Naive thymus-derived CD4-positive, alpha-beta T cell (primary cell): ENCODE measurements at regions of chr1 and their contacts with region 1.

Region 1: DNA sequence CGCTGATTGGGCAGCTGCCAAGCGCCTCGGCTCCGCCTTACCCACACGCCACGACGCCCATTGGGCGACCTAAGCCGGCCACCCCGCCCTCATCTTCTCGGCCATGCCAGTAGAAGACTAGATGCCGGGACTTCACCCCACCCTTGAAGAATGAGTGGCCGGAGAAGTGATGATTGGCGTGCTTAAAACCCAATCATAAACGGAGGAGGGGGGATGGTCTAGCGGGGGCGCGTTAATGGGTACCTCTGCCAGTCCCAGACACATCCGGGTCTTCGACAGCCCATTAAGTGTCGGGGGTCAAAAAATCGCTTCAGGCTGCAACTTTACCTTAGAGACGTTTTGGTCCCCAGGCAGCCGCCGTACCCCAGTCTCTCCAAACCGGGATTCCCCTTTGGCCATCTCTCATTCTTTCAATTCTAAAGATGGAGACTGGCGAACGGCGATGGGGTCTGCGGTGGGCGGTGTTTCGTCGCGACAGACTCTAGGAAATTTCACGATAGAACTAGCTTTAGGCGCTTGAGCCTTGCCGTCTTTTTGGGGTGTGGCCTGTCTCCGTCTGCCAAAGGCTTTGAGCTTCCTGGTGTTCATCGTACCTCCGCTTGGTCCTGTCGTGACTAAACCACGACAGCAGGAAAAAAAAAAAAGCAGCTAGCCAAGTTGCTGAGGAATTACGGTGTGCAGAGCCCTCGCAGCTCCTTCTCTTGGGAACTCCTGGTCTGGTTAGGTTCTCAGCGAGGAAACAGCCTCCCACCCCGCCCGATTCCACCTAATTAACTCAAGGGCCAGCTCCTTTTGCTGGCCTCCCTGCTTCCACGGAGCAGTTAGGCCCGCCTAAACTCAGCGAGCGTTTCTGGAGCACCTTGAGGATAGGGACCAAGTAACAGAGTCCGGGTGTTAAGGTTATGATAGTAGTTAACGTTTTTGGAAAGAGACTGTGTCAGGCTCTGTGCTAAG is at the start of gene GATAD2B:
- DNase-seq: peak; percentile 86 to 100 (median 99)
- ATAC-seq: peak; percentile 94
- H3K4me3 ChIP-seq: peak within 1 kb of the TSS; percentile 87
- H3K4me3 Mint-ChIP-seq: peak within 1 kb of the TSS; percentile 83 to 96 (median 94)
- H3K27ac ChIP-seq: peak within 1 kb of the TSS; percentile 97
- H3K27ac Mint-ChIP-seq: peak within 1 kb of the TSS; percentile 90 to 99 (median 97)
- H3K4me1 ChIP-seq: peaks cover 35% of the 10 kb centered on the region in 2 donors
- H3K4me1 Mint-ChIP-seq: peaks cover 31 to 53% (median 44%) of the 10 kb centered on the region in 7 donors
- H3K27me3 ChIP-seq: no peaks in the 10 kb centered on the region
- H3K27me3 Mint-ChIP-seq: peaks cover 0 to 3% (median 0%) of the 10 kb centered on the region in 5 donors
- total RNA-seq, gene GATAD2B: 67.3 to 102 (median 75.5) TPM

Region 2: GRCh38 chr1:153658400-153659174 is 264.7 kb before region 1 on chr1 and contains the start of gene SNAPIN:
- CTCF ChIA-PET with region 1: no interaction called
- POLR2A ChIA-PET with region 1: no interaction called
- intact Hi-C with region 1: loop called in 1 of 2 experiments (anchors 1 kb)
- DNase-seq: peak; percentile 81 to 94 (median 88)
- ATAC-seq: peak; percentile 98
- H3K4me3 ChIP-seq: peak within 1 kb of the TSS; percentile 93
- H3K4me3 Mint-ChIP-seq: peak within 1 kb of the TSS; percentile 91 to 97 (median 94)
- H3K27ac ChIP-seq: peak within 1 kb of the TSS; percentile 90
- H3K27ac Mint-ChIP-seq: peak within 1 kb of the TSS; percentile 90 to 98 (median 91)
- H3K4me1 ChIP-seq: peaks cover 9 to 13% of the 10 kb centered on the region in 2 donors
- H3K4me1 Mint-ChIP-seq: peaks cover 8 to 26% (median 14%) of the 10 kb centered on the region in 7 donors
- H3K27me3 ChIP-seq: no peaks in the 10 kb centered on the region
- H3K27me3 Mint-ChIP-seq: no peaks in the 10 kb centered on the region
- total RNA-seq, gene SNAPIN: 10.2 to 43.5 (median 29.8) TPM

Region 3: DNA sequence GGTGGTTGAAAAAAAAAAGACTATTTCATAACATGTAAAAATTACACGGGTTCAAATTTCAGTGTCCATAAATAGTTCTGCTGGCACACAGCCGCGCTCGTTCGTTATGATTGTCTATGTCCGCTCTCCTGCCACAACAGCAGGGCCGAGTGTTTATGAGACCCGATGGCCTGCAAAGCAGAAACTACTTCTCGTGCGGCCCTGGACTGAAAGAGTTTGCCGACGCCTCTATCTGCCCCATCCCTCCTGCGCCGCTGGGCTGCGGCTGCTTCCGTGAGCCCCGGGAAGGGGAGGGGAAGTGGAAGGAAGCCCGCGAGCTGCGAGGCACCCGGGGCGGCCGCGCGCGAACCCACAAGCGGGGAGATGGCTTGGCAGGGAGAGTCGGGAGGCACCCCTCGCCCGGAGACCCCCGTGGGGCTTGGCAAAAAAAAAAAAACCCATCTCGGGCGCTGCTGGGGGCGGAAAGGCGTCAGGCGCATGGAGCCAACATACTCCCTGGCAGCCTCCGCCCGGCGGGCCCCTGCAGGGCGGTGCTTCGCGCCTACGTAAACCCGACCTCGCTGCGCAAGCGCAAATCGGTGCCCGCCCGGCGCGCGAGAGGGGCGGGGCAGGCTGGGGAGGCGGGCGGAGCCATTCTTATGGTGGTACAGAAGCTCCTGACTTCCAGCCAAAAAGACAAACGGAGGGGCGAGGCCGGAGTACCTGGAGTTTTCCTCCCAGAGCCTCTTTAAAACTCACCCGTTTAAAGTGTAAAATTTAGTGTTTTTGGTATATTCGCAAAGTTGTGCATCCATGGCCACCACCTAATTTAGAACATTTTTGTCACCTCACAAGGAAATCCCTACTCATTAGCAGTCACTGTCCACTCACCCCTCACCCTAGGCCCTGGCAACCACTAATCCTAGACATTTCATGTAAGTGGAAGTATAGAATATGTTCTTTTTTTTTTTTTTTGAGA is 139.7 kb before region 1 on chr1:
- CTCF ChIA-PET with region 1: no interaction called
- POLR2A ChIA-PET with region 1: no interaction called
- intact Hi-C with region 1: loop called (anchors 1 to 2 kb)
- DNase-seq: peak; percentile 86 to 95 (median 92)
- ATAC-seq: peak; percentile 99
- H3K4me3 ChIP-seq: peak overlapping the region; percentile 78
- H3K4me3 Mint-ChIP-seq: peak overlapping the region; percentile 80 to 97 (median 90)
- H3K27ac ChIP-seq: peak overlapping the region; percentile 96
- H3K27ac Mint-ChIP-seq: peak overlapping the region; percentile 92 to 99 (median 95)
- H3K4me1 ChIP-seq: peaks cover 0 to 10% of the 10 kb centered on the region in 2 donors
- H3K4me1 Mint-ChIP-seq: peaks cover 0 to 17% (median 9%) of the 10 kb centered on the region in 7 donors
- H3K27me3 ChIP-seq: no peaks in the 10 kb centered on the region
- H3K27me3 Mint-ChIP-seq: peaks cover 0 to 6% (median 4%) of the 10 kb centered on the region in 5 donors

Region 4: DNA sequence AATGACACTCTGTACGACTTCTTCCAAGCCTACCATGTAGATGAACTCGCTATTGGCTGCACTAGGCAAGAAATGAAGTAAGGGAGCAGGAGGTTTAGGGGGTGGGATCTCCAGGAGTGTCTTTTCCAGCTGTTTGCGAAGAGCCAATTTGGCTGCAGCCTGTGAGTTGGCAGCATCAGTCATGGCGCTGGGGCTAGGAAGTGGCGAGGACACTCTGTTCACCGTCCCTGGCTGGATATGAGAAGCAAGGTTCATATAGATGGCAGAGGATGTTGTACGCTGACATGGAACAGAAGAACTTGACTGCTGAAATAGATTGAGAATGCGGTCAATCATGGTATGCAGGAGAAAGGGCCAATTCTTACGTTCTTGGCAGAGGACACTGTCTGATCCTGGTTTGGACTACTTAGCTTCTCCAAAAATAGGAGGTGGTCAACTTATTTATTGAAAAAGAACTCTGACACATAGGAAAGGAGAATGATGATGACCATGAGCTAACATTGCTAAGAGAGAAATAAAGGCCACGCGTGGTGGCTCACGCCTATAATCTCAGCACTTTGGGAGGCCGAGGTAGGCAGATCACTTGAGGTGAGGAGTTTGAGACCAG is 106.9 kb before region 1 on chr1:
- CTCF ChIA-PET with region 1: no interaction called
- POLR2A ChIA-PET with region 1: interaction called, 5 read pairs
- intact Hi-C with region 1: loop called in 1 of 2 experiments (anchors 1 kb)
- DNase-seq: no peak
- ATAC-seq: no peak
- H3K4me3 ChIP-seq: no peak overlapping the region
- H3K4me3 Mint-ChIP-seq: no peak overlapping the region
- H3K27ac ChIP-seq: no peak overlapping the region
- H3K27ac Mint-ChIP-seq: peak overlapping the region in 2 of 9 donors; percentile 19 to 26
- H3K4me1 ChIP-seq: no peaks in the 10 kb centered on the region
- H3K4me1 Mint-ChIP-seq: peaks cover 0 to 5% (median 2%) of the 10 kb centered on the region in 7 donors
- H3K27me3 ChIP-seq: no peaks in the 10 kb centered on the region
- H3K27me3 Mint-ChIP-seq: no peaks in the 10 kb centered on the region

Region 5: GRCh38 chr1:153936011-153936802 is 13.0 kb after region 1 on chr1:
- CTCF ChIA-PET with region 1: no interaction called
- POLR2A ChIA-PET with region 1: interaction called, 16 read pairs
- intact Hi-C with region 1: no loop called
- DNase-seq: no peak
- ATAC-seq: no peak
- H3K4me3 ChIP-seq: no peak overlapping the region
- H3K4me3 Mint-ChIP-seq: no peak overlapping the region
- H3K27ac ChIP-seq: no peak overlapping the region
- H3K27ac Mint-ChIP-seq: peak overlapping the region in 3 of 9 donors; percentile 12 to 75 (median 65)
- H3K4me1 ChIP-seq: no peaks in the 10 kb centered on the region
- H3K4me1 Mint-ChIP-seq: peaks cover 5 to 21% (median 10%) of the 10 kb centered on the region in 7 donors
- H3K27me3 ChIP-seq: no peaks in the 10 kb centered on the region
- H3K27me3 Mint-ChIP-seq: no peaks in the 10 kb centered on the region

Region 6: DNA sequence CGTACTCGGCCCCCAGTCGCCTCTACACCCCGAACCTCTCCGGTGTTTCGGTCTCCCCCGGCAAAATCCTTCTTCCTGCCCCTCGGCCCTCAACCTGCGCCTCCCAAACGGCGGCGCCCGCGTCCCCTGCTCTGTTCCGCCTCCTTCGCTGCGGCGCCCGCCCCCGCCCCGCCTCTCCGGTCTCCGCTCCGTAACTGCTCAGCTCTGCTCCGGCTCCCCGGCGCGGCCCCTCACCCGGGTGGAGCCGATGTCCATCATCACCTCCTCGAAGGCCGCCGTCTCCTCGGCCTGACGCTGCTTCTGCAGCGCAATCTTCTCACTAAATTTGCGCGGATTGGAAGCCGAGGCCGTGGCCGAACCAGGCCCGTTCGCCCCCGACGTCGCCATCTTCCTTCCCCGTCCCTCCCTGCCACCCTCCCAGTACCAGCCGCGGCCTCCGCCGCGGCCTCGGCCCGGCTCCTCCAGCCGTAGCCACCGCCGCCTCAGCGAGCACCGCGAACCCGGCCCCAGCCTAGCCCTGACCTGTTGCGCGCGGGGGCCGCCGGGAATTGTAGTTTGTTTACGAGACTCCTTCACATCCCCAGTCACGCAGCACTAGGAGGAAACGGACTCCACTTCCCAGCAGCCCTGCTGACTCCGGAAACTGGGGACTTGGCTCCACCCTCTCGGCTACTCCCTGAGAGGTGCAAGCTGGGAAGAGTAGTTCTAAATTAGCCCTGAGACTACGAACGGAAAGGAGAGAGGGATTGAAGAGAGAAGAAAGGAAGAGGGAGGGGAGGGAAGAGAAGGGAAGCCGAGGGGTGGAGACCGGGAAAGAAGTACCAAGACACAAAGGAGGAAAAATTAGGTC is 35.1 kb after region 1 on chr1 and contains the start of gene CRTC2:
- CTCF ChIA-PET with region 1: interaction called, 3 read pairs
- POLR2A ChIA-PET with region 1: interaction called, 16 read pairs
- intact Hi-C with region 1: loop called (anchors 1 kb)
- DNase-seq: peak; percentile 86 to 99 (median 96)
- ATAC-seq: peak; percentile 94
- H3K4me3 ChIP-seq: peak within 1 kb of the TSS; percentile 74
- H3K4me3 Mint-ChIP-seq: peak within 1 kb of the TSS; percentile 91 to 100 (median 97)
- H3K27ac ChIP-seq: peak within 1 kb of the TSS; percentile 92
- H3K27ac Mint-ChIP-seq: peak within 1 kb of the TSS; percentile 89 to 98 (median 94)
- H3K4me1 ChIP-seq: peaks cover 36% of the 10 kb centered on the region in 2 donors
- H3K4me1 Mint-ChIP-seq: peaks cover 34 to 71% (median 67%) of the 10 kb centered on the region in 7 donors
- H3K27me3 ChIP-seq: no peaks in the 10 kb centered on the region
- H3K27me3 Mint-ChIP-seq: no peaks in the 10 kb centered on the region
- total RNA-seq, gene CRTC2: 86.1 to 157 (median 119) TPM

Region 7: GRCh38 chr1:153977250-153978240 is 54.3 kb after region 1 on chr1 and contains the start of gene JTB:
- CTCF ChIA-PET with region 1: interaction called, 6 read pairs
- POLR2A ChIA-PET with region 1: interaction called, 27 read pairs
- intact Hi-C with region 1: loop called (anchors 1 to 2 kb)
- DNase-seq: peak; percentile 65 to 89 (median 78)
- ATAC-seq: peak; percentile 98
- H3K4me3 ChIP-seq: peak within 1 kb of the TSS; percentile 94
- H3K4me3 Mint-ChIP-seq: peak within 1 kb of the TSS; percentile 92 to 99 (median 97)
- H3K27ac ChIP-seq: peak within 1 kb of the TSS; percentile 96
- H3K27ac Mint-ChIP-seq: peak within 1 kb of the TSS; percentile 84 to 98 (median 94)
- H3K4me1 ChIP-seq: peaks cover 9 to 15% of the 10 kb centered on the region in 2 donors
- H3K4me1 Mint-ChIP-seq: peaks cover 23 to 51% (median 40%) of the 10 kb centered on the region in 7 donors
- H3K27me3 ChIP-seq: no peaks in the 10 kb centered on the region
- H3K27me3 Mint-ChIP-seq: no peaks in the 10 kb centered on the region
- total RNA-seq, gene JTB: 78.4 to 134 (median 104) TPM

Region 8: GRCh38 chr1:154335025-154335714 is 411.9 kb after region 1 on chr1:
- CTCF ChIA-PET with region 1: no interaction called
- POLR2A ChIA-PET with region 1: no interaction called
- intact Hi-C with region 1: no loop called
- DNase-seq: peak; percentile 74 to 91 (median 87)
- ATAC-seq: peak; percentile 99
- H3K4me3 ChIP-seq: peak overlapping the region; percentile 23
- H3K4me3 Mint-ChIP-seq: peak overlapping the region; percentile 60 to 85 (median 72)
- H3K27ac ChIP-seq: peak overlapping the region; percentile 68
- H3K27ac Mint-ChIP-seq: peak overlapping the region; percentile 87 to 97 (median 95)
- H3K4me1 ChIP-seq: peaks cover 73% of the 10 kb centered on the region in 2 donors
- H3K4me1 Mint-ChIP-seq: peaks cover 50 to 88% (median 77%) of the 10 kb centered on the region in 7 donors
- H3K27me3 ChIP-seq: no peaks in the 10 kb centered on the region
- H3K27me3 Mint-ChIP-seq: no peaks in the 10 kb centered on the region